ENCODE measurements at regions of chr9 and their contacts with region 1.

Region 1: DNA sequence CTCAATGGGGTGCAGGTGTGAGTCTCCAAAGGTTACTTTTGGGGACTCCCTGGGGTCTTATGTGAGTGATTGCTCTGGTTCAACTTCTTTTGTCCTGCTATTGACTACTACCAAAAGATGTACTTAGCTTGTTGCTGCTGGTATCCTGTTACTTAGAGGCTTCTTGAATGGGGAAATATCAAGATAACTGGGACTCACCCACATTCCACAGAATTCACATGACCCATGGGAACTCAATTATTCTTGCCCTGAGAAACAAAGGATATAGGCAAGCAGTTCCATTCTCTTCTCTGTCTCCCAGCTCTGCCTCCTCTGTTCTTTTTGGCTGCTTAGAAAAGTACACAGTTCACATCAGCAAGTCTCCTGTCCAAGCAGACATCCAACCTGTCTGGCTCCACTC is 105.9 kb downstream of the UNC13B start:
- DNase-seq: no peak
- CTCF ChIP-seq: no peak

Region 2: GRCh38 chr9:34559624-34560452 is 707.9 kb before region 1 on chr9:
- in situ Hi-C with region 1: no loop called
- DNase-seq: no peak
- CTCF ChIP-seq: no peak

Region 3: GRCh38 chr9:35116898-35117551 is 150.7 kb before region 1 on chr9:
- in situ Hi-C with region 1: loop called (anchors 10 kb)
- DNase-seq: peak; percentile 82
- CTCF ChIP-seq: peak; percentile 96

Region 4: GRCh38 chr9:35313916-35314315 is 46.2 kb after region 1 on chr9:
- in situ Hi-C with region 1: no loop called
- DNase-seq: no peak
- CTCF ChIP-seq: no peak

Measured in GM13977 (cell line).